ENCODE measurements at regions of chr6 and their contacts with region 1.

Region 1: GRCh38 chr6:44630125-44631028 is 242.9 kb downstream of the CDC5L start:
- DNase-seq: peak; percentile 55
- H3K4me3 Mint-ChIP-seq: no peak overlapping the region
- H3K27ac Mint-ChIP-seq: no peak overlapping the region
- H3K4me1 Mint-ChIP-seq: no peaks in the 10 kb centered on the region
- H3K27me3 Mint-ChIP-seq: peaks cover 14% of the 10 kb centered on the region
- CTCF ChIP-seq: peak; percentile 67

Region 2: GRCh38 chr6:44618371-44618770 is 12.0 kb before region 1 on chr6:
- CTCF ChIA-PET with region 1: interaction called, 34 read pairs
- POLR2A ChIA-PET with region 1: no interaction called
- intact Hi-C with region 1: no loop called
- DNase-seq: no peak
- H3K4me3 Mint-ChIP-seq: no peak overlapping the region
- H3K27ac Mint-ChIP-seq: no peak overlapping the region
- H3K4me1 Mint-ChIP-seq: no peaks in the 10 kb centered on the region
- H3K27me3 Mint-ChIP-seq: no peaks in the 10 kb centered on the region
- CTCF ChIP-seq: no peak

Region 3: DNA sequence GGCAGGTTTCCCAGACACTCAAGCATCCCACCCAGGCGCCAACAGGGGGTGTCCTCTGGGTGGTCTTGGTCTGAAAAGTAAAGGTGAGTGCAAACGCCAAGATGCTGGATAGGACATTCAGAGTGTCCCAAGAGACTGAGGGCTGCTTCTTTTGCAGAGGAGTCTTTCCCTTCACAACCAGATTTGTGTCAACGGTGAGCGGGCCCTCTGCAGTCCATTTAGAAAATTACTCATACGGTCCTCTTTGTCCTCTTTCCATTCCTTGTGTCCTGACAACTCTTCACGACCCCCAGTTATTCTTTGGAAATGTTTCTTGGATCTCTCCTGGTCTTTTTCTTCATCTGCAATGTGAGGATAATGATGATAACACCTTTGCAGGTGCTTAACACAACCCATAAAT is 14.9 kb after region 1 on chr6:
- CTCF ChIA-PET with region 1: interaction called, 15 read pairs
- POLR2A ChIA-PET with region 1: no interaction called
- intact Hi-C with region 1: no loop called
- DNase-seq: no peak
- H3K4me3 Mint-ChIP-seq: no peak overlapping the region
- H3K27ac Mint-ChIP-seq: no peak overlapping the region
- H3K4me1 Mint-ChIP-seq: peaks cover 16% of the 10 kb centered on the region
- H3K27me3 Mint-ChIP-seq: no peaks in the 10 kb centered on the region
- CTCF ChIP-seq: no peak

Region 4: DNA sequence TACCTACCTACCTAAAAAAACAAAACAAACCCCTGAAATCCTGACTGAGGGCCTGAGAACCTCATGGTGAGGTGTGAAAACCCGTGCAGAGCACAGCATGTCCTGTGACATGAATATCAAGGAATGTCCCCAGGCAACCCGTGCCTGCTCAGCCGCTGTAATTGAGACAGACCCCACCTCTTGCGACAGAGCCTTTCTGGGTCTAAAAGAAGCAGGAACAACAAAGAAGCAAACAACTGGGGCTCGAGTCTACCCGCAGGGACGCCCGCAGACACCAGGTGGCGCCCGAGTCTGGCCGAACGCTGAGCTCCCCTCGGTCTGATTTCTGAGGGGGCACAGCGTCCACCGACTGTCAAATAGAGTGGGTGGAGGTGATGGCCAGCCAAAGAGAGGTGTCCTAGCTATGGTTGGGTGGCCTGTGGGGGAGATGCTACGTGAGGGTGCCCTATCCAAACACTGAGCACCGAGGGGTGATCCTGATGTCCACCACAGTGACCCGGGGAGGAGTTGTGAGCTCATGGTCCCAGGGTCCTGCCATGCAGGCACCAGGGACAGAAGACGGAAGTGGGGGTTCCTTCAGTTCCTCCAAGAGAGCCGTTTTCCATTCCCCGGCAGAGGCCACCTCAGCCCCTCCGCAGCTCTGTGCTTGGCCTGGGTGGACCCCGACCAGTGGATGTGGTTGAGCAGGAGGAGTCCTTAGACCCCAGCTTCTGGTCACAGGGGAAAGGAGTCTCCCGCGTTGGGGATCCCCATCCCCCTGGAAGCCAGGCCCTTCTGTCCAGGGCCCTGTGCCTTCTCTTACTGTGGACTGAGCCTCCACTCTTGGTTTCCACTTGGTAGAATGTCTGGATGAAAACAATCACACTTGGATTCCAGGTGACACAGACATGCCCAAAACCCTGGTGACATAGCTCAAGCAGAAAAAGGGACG is 25.3 kb after region 1 on chr6:
- CTCF ChIA-PET with region 1: interaction called, 22 read pairs
- POLR2A ChIA-PET with region 1: no interaction called
- intact Hi-C with region 1: no loop called
- DNase-seq: peak; percentile 66
- H3K4me3 Mint-ChIP-seq: peak overlapping the region; percentile 3
- H3K27ac Mint-ChIP-seq: peak overlapping the region; percentile 76
- H3K4me1 Mint-ChIP-seq: peaks cover 13% of the 10 kb centered on the region
- H3K27me3 Mint-ChIP-seq: no peaks in the 10 kb centered on the region
- CTCF ChIP-seq: peak; percentile 97

Region 5: GRCh38 chr6:44960898-44961297 is 330.5 kb after region 1 on chr6:
- CTCF ChIA-PET with region 1: no interaction called
- POLR2A ChIA-PET with region 1: no interaction called
- intact Hi-C with region 1: no loop called
- DNase-seq: peak; percentile 5
- H3K4me3 Mint-ChIP-seq: no peak overlapping the region
- H3K27ac Mint-ChIP-seq: no peak overlapping the region
- H3K4me1 Mint-ChIP-seq: peaks cover 5% of the 10 kb centered on the region
- H3K27me3 Mint-ChIP-seq: no peaks in the 10 kb centered on the region
- CTCF ChIP-seq: no peak

Region 6: DNA sequence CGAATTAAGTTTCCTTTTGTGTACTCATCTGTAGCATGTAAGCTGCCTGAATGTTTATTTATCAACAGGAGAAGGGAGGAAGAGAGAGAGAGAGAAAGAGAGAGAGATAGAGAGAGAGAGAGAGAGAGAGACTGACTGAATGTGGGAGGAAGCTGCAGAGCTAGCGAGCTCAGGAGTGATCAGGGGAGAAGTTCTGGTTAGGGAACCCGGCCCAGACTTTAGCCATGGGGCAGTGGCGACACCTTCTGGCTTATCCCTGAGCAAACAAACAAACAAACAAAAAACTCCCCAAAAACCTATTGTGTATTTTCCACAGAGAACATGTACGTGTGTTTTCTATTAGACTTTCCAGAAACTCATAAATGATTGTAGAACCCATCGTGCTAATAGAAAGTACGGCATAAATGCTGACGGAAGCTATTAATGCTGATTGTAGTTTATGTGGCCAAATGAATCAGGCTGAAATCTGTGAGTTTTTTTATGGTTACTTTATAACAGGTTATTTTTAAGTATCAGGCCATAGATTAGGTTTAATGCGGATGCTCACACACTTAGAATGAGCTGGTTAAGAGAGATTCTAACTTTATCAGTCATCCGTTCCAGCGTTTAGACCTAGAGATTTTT is 1292.5 kb after region 1 on chr6:
- CTCF ChIA-PET with region 1: interaction called, 58 read pairs
- POLR2A ChIA-PET with region 1: interaction called, 9 read pairs
- intact Hi-C with region 1: loop called (anchors 2 kb)
- DNase-seq: peak; percentile 73
- H3K4me3 Mint-ChIP-seq: no peak overlapping the region
- H3K27ac Mint-ChIP-seq: peak overlapping the region; percentile 39
- H3K4me1 Mint-ChIP-seq: peaks cover 6% of the 10 kb centered on the region
- H3K27me3 Mint-ChIP-seq: no peaks in the 10 kb centered on the region
- CTCF ChIP-seq: peak; percentile 64

Measured in MCF 10A (cell line).